ENCODE measurements at regions of chr19 and their contacts with region 1.

Region 1: DNA sequence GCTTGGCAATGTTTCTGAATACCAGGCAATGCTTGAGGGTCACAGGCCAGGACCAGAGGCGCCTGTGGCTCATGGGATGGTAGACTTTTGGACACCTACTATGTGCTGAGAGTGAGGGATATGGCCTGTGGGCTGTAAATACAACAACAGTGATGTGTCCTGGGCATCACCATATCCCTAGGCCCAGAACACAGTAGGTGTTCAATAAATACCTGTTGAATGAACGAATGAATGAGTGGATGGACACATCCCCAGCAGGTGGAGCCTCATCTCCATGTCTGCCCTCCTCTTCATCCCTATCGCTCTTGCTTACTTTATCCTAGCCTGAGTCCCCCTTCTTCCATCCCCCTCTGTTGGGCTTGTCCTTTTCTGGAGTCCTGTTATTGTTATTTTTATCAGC is 16.5 kb upstream of the NANOS2 start:
- DNase-seq: no peak
- ATAC-seq: no peak

Region 2: DNA sequence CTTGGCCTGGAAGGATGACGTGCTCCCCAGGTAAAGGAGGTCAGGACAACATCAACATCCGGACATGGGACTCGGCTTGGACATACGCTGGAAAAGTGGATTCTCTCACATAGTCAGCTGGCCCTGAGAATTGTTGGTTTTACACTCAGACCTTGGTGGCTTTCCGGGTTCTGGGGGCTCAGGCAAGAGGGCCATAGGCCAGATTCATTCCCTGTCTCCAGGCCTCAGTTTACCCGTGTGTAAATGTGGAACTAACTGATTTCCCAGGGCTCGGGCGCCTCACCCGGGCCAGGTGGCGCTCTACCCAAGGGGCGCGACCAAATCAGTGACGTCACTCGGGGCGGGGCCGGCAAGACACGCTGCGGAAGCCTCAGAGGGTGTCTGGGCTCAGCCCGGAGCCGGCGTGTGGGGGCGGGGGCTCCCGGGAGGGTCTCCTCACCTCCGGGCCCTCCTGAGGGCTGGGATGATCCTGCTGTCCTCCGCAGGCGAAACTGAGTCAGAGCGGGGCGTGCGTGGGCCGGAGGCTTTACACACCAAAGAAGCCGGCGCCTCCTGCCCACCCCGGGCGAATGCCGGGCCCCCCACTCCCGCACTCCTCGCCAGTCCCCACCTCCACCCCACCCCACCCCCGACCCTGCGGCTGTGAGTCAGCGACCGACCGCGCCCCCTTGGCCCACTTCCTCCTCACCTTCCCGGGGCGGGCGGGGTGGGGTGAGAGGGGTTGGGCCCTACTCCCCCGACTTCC is 424.6 kb before region 1 on chr19:
- intact Hi-C with region 1: no loop called
- DNase-seq: peak; percentile 98
- ATAC-seq: peak; percentile 87

Region 3: GRCh38 chr19:45817010-45817724 is 113.9 kb before region 1 on chr19:
- intact Hi-C with region 1: no loop called
- DNase-seq: peak; percentile 97
- ATAC-seq: peak; percentile 88

Region 4: GRCh38 chr19:45902651-45903625 is 28.1 kb before region 1 on chr19:
- intact Hi-C with region 1: no loop called
- DNase-seq: peak; percentile 99
- ATAC-seq: peak; percentile 97

Region 5: DNA sequence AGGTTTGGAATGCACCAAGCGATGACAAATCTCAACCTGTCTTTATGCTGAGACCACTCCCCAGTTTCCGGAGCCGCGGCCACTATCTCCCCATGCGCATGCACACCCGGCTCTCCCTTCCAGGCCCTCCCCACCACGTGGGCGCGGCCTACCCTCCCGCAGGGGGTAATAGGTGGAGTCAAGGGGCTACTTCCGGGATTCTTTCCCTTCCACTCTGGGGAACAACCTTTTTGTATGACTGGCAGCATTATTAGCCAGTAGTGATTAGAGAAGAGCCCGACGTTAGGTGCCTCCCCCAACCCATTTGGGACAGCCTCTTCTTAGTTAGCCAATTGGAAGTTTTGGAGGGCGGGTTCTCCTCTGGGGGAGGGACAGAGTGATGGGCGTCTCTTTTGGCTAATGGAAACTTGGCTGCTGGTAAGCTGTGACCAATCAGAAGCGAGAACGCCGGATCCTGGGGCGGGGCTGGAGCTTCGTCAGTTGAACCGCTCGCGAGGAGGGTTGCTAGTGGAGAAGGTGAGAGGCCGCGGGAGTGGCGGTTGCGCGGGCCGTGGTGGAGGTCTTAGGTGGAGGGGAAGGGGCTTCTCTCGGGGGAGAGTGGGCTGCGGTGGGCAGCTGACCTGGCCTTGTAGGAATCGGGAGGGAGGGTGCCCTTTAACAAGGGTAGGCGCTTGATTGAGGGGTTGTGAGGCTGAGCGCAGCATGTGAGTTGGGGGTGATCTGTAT is 64.1 kb after region 1 on chr19 and contains the start of gene CCDC61:
- intact Hi-C with region 1: loop called (anchors 10 kb)
- DNase-seq: peak; percentile 97
- ATAC-seq: peak; percentile 99
- total RNA-seq, gene CCDC61: 8.2 TPM